CD4-positive, alpha-beta T cell (primary cell): ENCODE measurements at regions of chr12 and their contacts with region 1.

Region 1: DNA sequence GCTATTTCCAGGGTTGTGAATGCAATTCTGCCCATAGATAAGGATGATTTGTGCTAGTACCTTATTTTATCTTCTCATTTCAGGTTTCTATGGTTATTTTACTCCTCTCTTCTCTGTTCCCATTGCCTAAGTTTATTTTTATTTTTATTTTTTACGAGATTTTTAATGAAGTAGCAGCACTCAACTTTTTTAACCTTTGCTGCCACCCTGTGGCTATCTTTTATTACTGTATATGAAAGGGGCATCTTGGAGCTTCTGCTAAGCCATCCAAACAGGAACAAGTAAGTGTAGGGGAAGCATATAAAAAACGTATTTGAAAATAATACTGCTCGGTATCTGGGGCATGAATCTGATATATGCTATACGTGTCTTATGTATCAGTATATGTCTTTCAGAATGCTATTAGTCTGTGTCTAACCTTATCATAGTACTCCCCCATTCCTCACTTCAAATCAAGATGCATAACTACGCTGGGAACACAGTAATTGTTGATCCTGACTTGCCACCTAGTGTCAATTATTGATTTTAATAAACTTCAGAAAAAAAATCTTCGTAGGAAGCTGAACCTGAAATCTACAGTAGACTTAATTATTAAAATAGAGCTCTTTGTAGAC is 60.3 kb downstream of the KLRG1 start:
- DNase-seq: peak in 4 of 14 experiments; percentile 60 to 79 (median 74)
- ATAC-seq: peak; percentile 85
- H3K4me3 ChIP-seq: no peak overlapping the region
- H3K4me3 Mint-ChIP-seq: no peak overlapping the region
- H3K27ac ChIP-seq: no peak overlapping the region
- H3K27ac Mint-ChIP-seq: peak overlapping the region; percentile 15
- H3K4me1 ChIP-seq: peaks cover 9% of the 10 kb centered on the region
- H3K4me1 Mint-ChIP-seq: peaks cover 27% of the 10 kb centered on the region
- H3K27me3 ChIP-seq: no peaks in the 10 kb centered on the region
- H3K27me3 Mint-ChIP-seq: no peaks in the 10 kb centered on the region
- CTCF ChIP-seq: peak; percentile 74

Region 2: DNA sequence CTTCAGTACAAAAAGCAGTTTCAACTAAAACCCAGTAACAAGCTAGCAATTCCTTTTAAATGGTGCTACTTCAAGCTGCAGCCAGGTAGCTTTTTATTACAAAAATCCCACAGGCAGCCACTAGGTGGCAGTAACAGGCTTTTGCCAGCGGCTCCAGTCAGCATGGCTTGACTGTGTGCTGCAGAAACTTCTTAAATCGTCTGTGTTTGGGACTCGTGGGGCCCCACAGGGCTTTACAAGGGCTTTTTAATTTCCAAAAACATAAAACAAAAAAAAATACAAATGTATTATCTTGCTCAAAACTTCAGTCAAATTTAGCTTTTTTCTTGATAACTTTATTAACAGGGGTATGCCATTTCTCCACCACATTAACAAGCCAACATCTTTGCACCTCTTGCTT is 505.3 kb before region 1 on chr12:
- CTCF ChIA-PET with region 1: interaction called, 5 read pairs
- POLR2A ChIA-PET with region 1: interaction called, 5 read pairs
- intact Hi-C with region 1: loop called (anchors 1 to 5 kb)
- DNase-seq: peak; percentile 49 to 84 (median 65)
- ATAC-seq: peak; percentile 85
- H3K4me3 ChIP-seq: no peak overlapping the region
- H3K4me3 Mint-ChIP-seq: no peak overlapping the region
- H3K27ac ChIP-seq: no peak overlapping the region
- H3K27ac Mint-ChIP-seq: no peak overlapping the region
- H3K4me1 ChIP-seq: no peaks in the 10 kb centered on the region
- H3K4me1 Mint-ChIP-seq: peaks cover 6% of the 10 kb centered on the region
- H3K27me3 ChIP-seq: peaks cover 4 to 8% of the 10 kb centered on the region in 2 experiments
- H3K27me3 Mint-ChIP-seq: peaks cover 44% of the 10 kb centered on the region
- CTCF ChIP-seq: peak; percentile 98

Region 3: GRCh38 chr12:8662593-8662992 is 387.0 kb before region 1 on chr12 and contains the start of gene MFAP5:
- CTCF ChIA-PET with region 1: interaction called, 10 read pairs
- POLR2A ChIA-PET with region 1: no interaction called
- intact Hi-C with region 1: no loop called
- DNase-seq: no peak
- ATAC-seq: no peak
- H3K4me3 ChIP-seq: no peak within 1 kb of the TSS
- H3K4me3 Mint-ChIP-seq: no peak within 1 kb of the TSS
- H3K27ac ChIP-seq: no peak within 1 kb of the TSS
- H3K27ac Mint-ChIP-seq: no peak within 1 kb of the TSS
- H3K4me1 ChIP-seq: no peaks in the 10 kb centered on the region
- H3K4me1 Mint-ChIP-seq: no peaks in the 10 kb centered on the region
- H3K27me3 ChIP-seq: no peaks in the 10 kb centered on the region
- H3K27me3 Mint-ChIP-seq: peaks cover 5% of the 10 kb centered on the region
- CTCF ChIP-seq: no peak
- total RNA-seq, gene MFAP5: not detected

Region 4: DNA sequence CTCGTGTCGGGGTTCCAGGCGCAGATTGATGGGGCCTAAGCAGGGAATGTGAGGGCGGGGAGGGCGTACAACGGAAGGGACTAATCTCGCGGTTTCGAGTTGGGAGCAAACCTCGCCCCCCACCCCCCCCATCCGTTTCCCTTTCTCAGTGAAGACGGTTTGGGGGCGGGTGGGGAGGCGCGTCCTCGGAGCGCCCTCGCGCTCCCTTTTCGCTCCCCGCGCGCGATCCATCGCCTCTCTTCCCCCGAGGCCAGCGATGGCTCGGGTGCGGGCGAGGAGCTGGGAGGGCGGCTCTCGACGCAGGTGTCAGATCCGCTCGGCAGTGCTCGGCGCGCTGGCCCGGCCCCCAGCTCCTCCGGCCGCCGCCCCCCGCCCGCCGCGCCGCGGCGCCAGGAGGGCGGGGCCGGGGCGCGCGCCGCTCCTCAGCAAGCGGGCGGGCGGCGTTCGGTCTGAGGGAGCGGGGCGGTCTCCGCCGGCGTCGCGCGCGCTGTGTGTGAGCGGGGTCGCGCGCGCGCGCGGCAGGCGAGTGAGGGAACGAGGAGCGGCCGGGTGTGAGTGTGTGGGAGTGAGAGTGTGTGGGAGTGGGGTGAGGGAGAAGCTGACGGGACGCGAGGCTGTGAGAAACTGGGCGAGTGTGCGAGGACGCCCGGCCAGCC is 352.0 kb before region 1 on chr12 and contains the start of gene RIMKLB:
- CTCF ChIA-PET with region 1: no interaction called
- POLR2A ChIA-PET with region 1: no interaction called
- intact Hi-C with region 1: loop called in 1 of 2 experiments (anchors 5 kb)
- DNase-seq: peak; percentile 50 to 92 (median 76)
- ATAC-seq: peak; percentile 79
- H3K4me3 ChIP-seq: peak within 1 kb of the TSS; percentile 72
- H3K4me3 Mint-ChIP-seq: peak within 1 kb of the TSS; percentile 99
- H3K27ac ChIP-seq: peak within 1 kb of the TSS; percentile 32 to 62
- H3K27ac Mint-ChIP-seq: peak within 1 kb of the TSS; percentile 83
- H3K4me1 ChIP-seq: peaks cover 12% of the 10 kb centered on the region
- H3K4me1 Mint-ChIP-seq: peaks cover 46% of the 10 kb centered on the region
- H3K27me3 ChIP-seq: no peaks in the 10 kb centered on the region
- H3K27me3 Mint-ChIP-seq: no peaks in the 10 kb centered on the region
- CTCF ChIP-seq: no peak
- total RNA-seq, gene RIMKLB: 14.8 to 15.2 TPM

Region 5: DNA sequence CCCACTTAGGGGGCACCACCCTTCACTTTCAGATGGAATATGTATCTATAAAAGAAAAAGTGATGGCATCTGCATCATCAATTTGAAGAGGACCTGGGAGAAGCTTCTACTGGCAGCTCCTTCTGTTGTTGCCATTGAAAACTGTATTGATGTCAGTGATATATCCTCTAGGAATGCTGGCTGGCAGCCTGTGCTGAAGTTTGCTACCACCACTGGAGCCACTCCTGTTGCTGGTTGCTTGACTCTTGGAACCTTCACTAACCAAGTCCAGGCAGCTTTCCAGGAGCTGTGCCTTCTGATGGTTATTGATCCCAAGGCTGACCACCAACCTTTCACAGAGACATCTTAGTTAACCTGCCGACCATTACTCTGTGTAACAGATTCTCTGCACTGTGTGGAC is 307.1 kb before region 1 on chr12:
- CTCF ChIA-PET with region 1: no interaction called
- POLR2A ChIA-PET with region 1: no interaction called
- intact Hi-C with region 1: no loop called
- DNase-seq: no peak
- ATAC-seq: no peak
- H3K4me3 ChIP-seq: no peak overlapping the region
- H3K4me3 Mint-ChIP-seq: no peak overlapping the region
- H3K27ac ChIP-seq: no peak overlapping the region
- H3K27ac Mint-ChIP-seq: no peak overlapping the region
- H3K4me1 ChIP-seq: no peaks in the 10 kb centered on the region
- H3K4me1 Mint-ChIP-seq: no peaks in the 10 kb centered on the region
- H3K27me3 ChIP-seq: no peaks in the 10 kb centered on the region
- H3K27me3 Mint-ChIP-seq: no peaks in the 10 kb centered on the region
- CTCF ChIP-seq: no peak

Region 6: GRCh38 chr12:8890313-8891085 is 159.1 kb before region 1 on chr12:
- CTCF ChIA-PET with region 1: interaction called, 20 read pairs
- POLR2A ChIA-PET with region 1: interaction called, 9 read pairs
- intact Hi-C with region 1: loop called in 1 of 2 experiments (anchors 2 kb)
- DNase-seq: peak; percentile 38 to 81 (median 52)
- ATAC-seq: peak; percentile 88
- H3K4me3 ChIP-seq: peak overlapping the region; percentile 57
- H3K4me3 Mint-ChIP-seq: peak overlapping the region; percentile 92
- H3K27ac ChIP-seq: no peak overlapping the region
- H3K27ac Mint-ChIP-seq: peak overlapping the region; percentile 29
- H3K4me1 ChIP-seq: peaks cover 3% of the 10 kb centered on the region
- H3K4me1 Mint-ChIP-seq: peaks cover 5% of the 10 kb centered on the region
- H3K27me3 ChIP-seq: no peaks in the 10 kb centered on the region
- H3K27me3 Mint-ChIP-seq: no peaks in the 10 kb centered on the region
- CTCF ChIP-seq: peak; percentile 93

Region 7: GRCh38 chr12:9027161-9028059 is 22.2 kb before region 1 on chr12:
- CTCF ChIA-PET with region 1: interaction called, 10 read pairs
- POLR2A ChIA-PET with region 1: no interaction called
- intact Hi-C with region 1: no loop called
- DNase-seq: peak in 2 of 14 experiments; percentile 21 to 44
- ATAC-seq: no peak
- H3K4me3 ChIP-seq: no peak overlapping the region
- H3K4me3 Mint-ChIP-seq: peak overlapping the region; percentile 58
- H3K27ac ChIP-seq: peak overlapping the region; percentile 63 to 92
- H3K27ac Mint-ChIP-seq: no peak overlapping the region
- H3K4me1 ChIP-seq: peaks cover 83% of the 10 kb centered on the region
- H3K4me1 Mint-ChIP-seq: peaks cover 49% of the 10 kb centered on the region
- H3K27me3 ChIP-seq: no peaks in the 10 kb centered on the region
- H3K27me3 Mint-ChIP-seq: no peaks in the 10 kb centered on the region
- CTCF ChIP-seq: no peak

Region 8: DNA sequence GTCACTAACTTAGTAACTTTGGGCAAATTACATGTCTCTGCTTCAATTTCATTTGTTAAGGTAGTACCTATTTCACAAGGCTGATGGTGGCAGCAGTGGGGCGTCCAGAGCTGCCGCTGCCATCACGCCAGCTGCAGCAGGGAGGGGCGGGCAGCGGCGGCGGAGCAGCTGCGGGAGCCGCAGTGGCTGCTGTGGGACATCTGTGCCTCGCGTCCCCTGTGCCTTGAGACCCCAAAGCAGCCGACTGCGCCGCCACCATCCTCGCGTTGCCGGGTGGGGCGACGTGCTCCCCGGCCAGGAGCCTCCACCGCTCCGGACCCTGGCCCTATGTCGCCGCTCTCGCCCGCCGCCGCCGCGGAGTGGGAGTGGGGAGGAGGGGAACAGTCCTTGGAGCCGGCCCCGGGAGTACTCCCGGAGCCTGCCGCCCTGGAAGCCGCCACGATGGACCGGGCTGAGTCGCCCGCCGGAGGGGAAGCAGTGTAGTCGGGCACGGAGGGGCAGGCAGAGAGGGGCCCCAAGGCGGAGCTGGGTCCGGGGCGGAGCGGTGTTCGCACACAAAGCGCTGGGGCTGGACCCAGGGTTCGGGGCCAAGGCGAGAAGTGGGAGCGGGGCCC is 14.7 kb after region 1 on chr12:
- CTCF ChIA-PET with region 1: interaction called, 10 read pairs
- POLR2A ChIA-PET with region 1: interaction called, 5 read pairs
- intact Hi-C with region 1: no loop called
- DNase-seq: peak; percentile 24 to 77 (median 44)
- ATAC-seq: peak; percentile 93
- H3K4me3 ChIP-seq: peak overlapping the region; percentile 60
- H3K4me3 Mint-ChIP-seq: peak overlapping the region; percentile 76
- H3K27ac ChIP-seq: no peak overlapping the region
- H3K27ac Mint-ChIP-seq: no peak overlapping the region
- H3K4me1 ChIP-seq: peaks cover 15% of the 10 kb centered on the region
- H3K4me1 Mint-ChIP-seq: peaks cover 11% of the 10 kb centered on the region
- H3K27me3 ChIP-seq: no peaks in the 10 kb centered on the region
- H3K27me3 Mint-ChIP-seq: no peaks in the 10 kb centered on the region
- CTCF ChIP-seq: peak; percentile 48